ENCODE measurements at regions of chr2 and their contacts with region 1.

Region 1: DNA sequence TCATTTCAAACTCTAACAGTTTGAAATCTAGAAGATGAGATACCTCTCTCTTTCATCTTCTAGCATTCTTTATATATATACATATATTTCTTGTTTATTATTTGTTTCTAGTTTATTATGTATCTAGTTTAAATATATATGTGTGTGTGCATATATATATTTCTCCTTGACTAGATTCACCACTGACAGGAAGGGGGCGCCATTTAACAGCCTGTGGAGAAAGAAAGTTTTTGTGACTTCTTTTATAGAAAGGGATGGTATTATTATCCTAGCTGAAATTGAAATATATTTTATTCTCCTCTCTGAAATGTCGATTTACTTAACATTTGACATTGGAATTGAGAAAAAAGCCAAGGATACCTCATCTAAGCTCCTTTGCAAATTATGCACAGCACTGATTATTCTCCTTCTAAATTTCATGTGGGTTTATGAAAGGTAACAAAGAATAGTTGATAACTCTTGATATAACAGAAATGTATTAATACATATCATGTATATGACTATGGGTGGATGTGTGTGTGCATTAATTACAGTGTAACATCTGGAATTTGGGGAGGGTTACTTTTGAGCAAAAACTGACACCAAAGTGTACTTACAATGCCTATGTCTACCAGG is 160.7 kb upstream of the NT5C1B start:
- DNase-seq: no peak
- H3K4me3 ChIP-seq: no peak overlapping the region
- H3K27ac ChIP-seq: peak overlapping the region in 2 of 4 donors; percentile 54 to 64
- H3K4me1 ChIP-seq: peaks cover 0 to 48% (median 30%) of the 10 kb centered on the region in 4 donors
- H3K27me3 ChIP-seq: no peaks in the 10 kb centered on the region
- CTCF ChIP-seq: peak; percentile 78 to 86 (median 81)
- EP300 ChIP-seq: no peak
- POLR2A ChIP-seq: no peak

Region 2: GRCh38 chr2:18435421-18436037 is 314.5 kb before region 1 on chr2:
- intact Hi-C with region 1: loop called (anchors 10 kb)
- DNase-seq: no peak
- H3K4me3 ChIP-seq: no peak overlapping the region
- H3K27ac ChIP-seq: peak overlapping the region; percentile 11 to 47 (median 32)
- H3K4me1 ChIP-seq: peaks cover 0 to 55% (median 50%) of the 10 kb centered on the region in 4 donors
- H3K27me3 ChIP-seq: no peaks in the 10 kb centered on the region
- CTCF ChIP-seq: peak; percentile 57 to 63 (median 61)
- EP300 ChIP-seq: no peak
- POLR2A ChIP-seq: no peak

Region 3: GRCh38 chr2:18639756-18640453 is 110.1 kb before region 1 on chr2:
- intact Hi-C with region 1: no loop called
- DNase-seq: no peak
- H3K4me3 ChIP-seq: no peak overlapping the region
- H3K27ac ChIP-seq: no peak overlapping the region
- H3K4me1 ChIP-seq: peaks cover 5 to 18% (median 8%) of the 10 kb centered on the region in 4 donors
- H3K27me3 ChIP-seq: no peaks in the 10 kb centered on the region
- CTCF ChIP-seq: no peak
- EP300 ChIP-seq: no peak
- POLR2A ChIP-seq: no peak

Region 4: DNA sequence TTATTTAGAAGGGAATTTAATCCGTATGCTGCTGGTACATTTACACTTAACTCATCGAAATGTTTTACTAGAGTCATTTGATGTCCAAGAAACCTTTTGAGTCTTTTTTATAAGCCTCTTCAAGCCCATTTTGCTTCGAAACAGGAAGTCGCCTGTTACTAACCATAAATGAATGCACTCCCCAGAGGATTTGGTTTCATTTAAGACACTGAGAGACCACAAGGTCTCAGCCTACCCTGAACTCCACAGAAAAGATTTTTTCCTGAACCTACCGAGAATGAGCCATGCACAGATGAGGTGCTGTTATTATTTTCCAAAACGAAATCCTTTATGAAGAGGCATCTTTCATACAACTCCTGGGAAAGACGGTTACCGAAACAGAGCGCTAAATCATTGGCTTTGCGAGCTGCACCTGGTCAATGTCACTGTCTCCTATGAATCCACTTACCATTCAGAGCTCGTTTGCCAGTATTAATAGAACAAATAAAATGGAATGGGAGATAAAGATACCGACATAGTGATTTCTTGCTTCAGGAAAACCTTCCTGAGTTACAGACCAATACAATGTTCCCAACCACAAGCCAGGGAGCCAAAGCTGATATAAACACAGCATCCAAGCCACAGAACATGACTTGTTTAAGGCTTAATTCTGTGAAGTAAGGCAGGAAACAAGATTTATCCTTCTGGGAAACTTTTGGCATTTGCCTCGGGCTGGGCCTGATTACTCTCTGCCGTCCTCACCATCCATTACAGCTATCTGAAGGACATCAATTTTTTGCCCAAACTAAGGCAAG is 226.3 kb after region 1 on chr2:
- intact Hi-C with region 1: loop called (anchors 10 kb)
- DNase-seq: no peak
- H3K4me3 ChIP-seq: peak overlapping the region; percentile 33 to 50 (median 42)
- H3K27ac ChIP-seq: peak overlapping the region; percentile 67 to 85 (median 80)
- H3K4me1 ChIP-seq: peaks cover 23 to 58% (median 48%) of the 10 kb centered on the region in 4 donors
- H3K27me3 ChIP-seq: no peaks in the 10 kb centered on the region
- CTCF ChIP-seq: no peak
- EP300 ChIP-seq: peak; percentile 24
- POLR2A ChIP-seq: no peak

Measured in esophagus muscularis mucosa (tissue), 4 donors.